Aorta (tissue), 5 donors: ENCODE measurements at regions of chr12 and their contacts with region 1.

Region 1: GRCh38 chr12:12704593-12705230 is 8.7 kb upstream of the GPR19 start:
- DNase-seq: peak in 1 of 2 donors; percentile 64
- ATAC-seq: peak; percentile 96
- H3K4me3 ChIP-seq: no peak overlapping the region
- H3K27ac ChIP-seq: no peak overlapping the region
- H3K4me1 ChIP-seq: no peaks in the 10 kb centered on the region
- H3K27me3 ChIP-seq: no peaks in the 10 kb centered on the region

Region 2: DNA sequence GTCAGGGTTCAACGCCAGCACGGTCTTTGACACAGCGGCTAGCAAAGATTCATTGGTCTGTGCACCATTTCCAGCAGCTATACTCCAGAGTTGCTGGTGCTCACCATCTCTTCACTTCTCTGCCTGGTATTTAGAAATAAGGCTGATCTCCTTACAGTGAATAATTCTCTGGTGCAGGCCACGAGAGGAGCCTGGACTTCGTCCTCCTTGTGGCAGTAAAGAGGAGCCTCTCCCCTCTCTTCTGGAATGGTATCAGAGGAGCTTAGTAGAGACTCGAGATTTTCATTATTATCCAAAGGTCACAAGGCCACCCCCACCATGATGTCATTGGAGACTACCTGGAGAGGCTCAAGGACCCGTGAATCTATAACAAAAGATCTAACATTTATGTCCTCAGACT is 664.8 kb before region 1 on chr12:
- intact Hi-C with region 1: loop called in 1 of 2 experiments (anchors 5 kb)
- DNase-seq: no peak
- ATAC-seq: no peak
- H3K4me3 ChIP-seq: no peak overlapping the region
- H3K27ac ChIP-seq: no peak overlapping the region
- H3K4me1 ChIP-seq: no peaks in the 10 kb centered on the region
- H3K27me3 ChIP-seq: no peaks in the 10 kb centered on the region

Region 3: GRCh38 chr12:12081836-12082497 is 622.7 kb before region 1 on chr12:
- intact Hi-C with region 1: loop called in 1 of 2 experiments (anchors 10 kb)
- DNase-seq: no peak
- ATAC-seq: peak; percentile 81
- H3K4me3 ChIP-seq: no peak overlapping the region
- H3K27ac ChIP-seq: peak overlapping the region in 1 of 2 donors; percentile 0
- H3K4me1 ChIP-seq: no peaks in the 10 kb centered on the region
- H3K27me3 ChIP-seq: no peaks in the 10 kb centered on the region

Region 4: GRCh38 chr12:12376646-12377448 is 327.9 kb before region 1 on chr12:
- intact Hi-C with region 1: loop called (anchors 5 kb)
- DNase-seq: no peak
- ATAC-seq: peak; percentile 89
- H3K4me3 ChIP-seq: no peak overlapping the region
- H3K27ac ChIP-seq: no peak overlapping the region
- H3K4me1 ChIP-seq: peaks cover 0 to 1% of the 10 kb centered on the region in 2 donors
- H3K27me3 ChIP-seq: no peaks in the 10 kb centered on the region

Region 5: DNA sequence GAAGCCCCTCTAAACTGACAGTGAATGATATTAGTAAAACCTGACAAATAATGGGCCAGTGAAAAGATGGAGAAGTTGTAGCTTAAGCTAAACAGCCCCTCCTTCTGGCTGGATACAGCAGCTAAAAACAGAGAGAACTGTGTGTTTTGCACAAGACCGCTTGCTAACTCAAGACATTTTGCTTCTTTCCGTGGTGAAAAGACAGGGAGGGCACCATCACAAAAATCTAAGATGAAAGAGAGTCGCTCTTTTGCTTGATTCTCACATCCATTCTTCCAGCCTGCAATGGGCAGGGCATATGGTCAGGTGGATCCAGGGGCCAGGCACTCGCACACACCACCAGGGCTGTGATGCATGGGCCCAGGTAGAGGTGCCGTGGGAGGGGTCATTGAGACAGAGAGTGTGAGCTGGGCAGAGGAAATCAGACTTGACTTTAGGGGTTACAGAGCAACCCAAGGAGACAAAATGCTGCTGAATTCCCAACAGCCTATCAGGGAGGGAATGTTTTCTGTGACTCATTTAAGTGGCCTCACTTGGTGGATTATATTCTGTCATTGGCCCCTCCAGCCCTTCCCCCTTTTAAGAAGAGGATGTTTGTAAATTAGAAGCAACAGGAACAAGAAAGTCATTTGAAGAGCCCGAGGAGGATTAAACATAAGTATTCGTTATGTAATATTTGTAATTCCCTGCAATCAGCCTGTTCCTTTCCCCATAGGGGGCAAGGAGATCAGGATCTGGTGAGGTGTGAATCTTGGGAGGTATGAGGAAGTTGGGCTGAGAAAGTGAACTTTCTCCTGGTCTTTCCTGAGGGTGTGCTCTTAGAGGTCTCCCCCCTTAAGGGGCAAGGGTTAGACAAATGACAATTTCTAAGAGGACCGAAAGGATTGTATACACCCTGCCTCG is 504.1 kb after region 1 on chr12:
- intact Hi-C with region 1: no loop called
- DNase-seq: no peak
- ATAC-seq: no peak
- H3K4me3 ChIP-seq: no peak overlapping the region
- H3K27ac ChIP-seq: no peak overlapping the region
- H3K4me1 ChIP-seq: no peaks in the 10 kb centered on the region
- H3K27me3 ChIP-seq: no peaks in the 10 kb centered on the region